Activated CD4-positive, alpha-beta T cell treated with anti-CD3 and anti-CD28 coated beads, Interleukin-2, amount 10 ng/mL, durations not matched to agents 24 days and 14 days (primary cell): ENCODE measurements at regions of chr19 and their contacts with region 1.

Region 1: GRCh38 chr19:54523403-54523802 is 20.8 kb downstream of the LAIR2 start:
- DNase-seq: peak; percentile 82
- H3K4me3 Mint-ChIP-seq: peak overlapping the region; percentile 79
- H3K27ac Mint-ChIP-seq: peak overlapping the region; percentile 81
- H3K4me1 Mint-ChIP-seq: peaks cover 52% of the 10 kb centered on the region
- H3K27me3 Mint-ChIP-seq: no peaks in the 10 kb centered on the region

Region 2: GRCh38 chr19:54481322-54481930 is 42.0 kb before region 1 on chr19:
- intact Hi-C with region 1: loop called (anchors 5 kb)
- DNase-seq: peak; percentile 84
- H3K4me3 Mint-ChIP-seq: no peak overlapping the region
- H3K27ac Mint-ChIP-seq: no peak overlapping the region
- H3K4me1 Mint-ChIP-seq: peaks cover 8% of the 10 kb centered on the region
- H3K27me3 Mint-ChIP-seq: peaks cover 24% of the 10 kb centered on the region

Region 3: GRCh38 chr19:54492568-54492967 is 30.8 kb before region 1 on chr19:
- intact Hi-C with region 1: no loop called
- DNase-seq: no peak
- H3K4me3 Mint-ChIP-seq: no peak overlapping the region
- H3K27ac Mint-ChIP-seq: no peak overlapping the region
- H3K4me1 Mint-ChIP-seq: peaks cover 1% of the 10 kb centered on the region
- H3K27me3 Mint-ChIP-seq: peaks cover 35% of the 10 kb centered on the region

Region 4: GRCh38 chr19:54558339-54558738 is 34.9 kb after region 1 on chr19:
- intact Hi-C with region 1: loop called (anchors 5 kb)
- DNase-seq: no peak
- H3K4me3 Mint-ChIP-seq: no peak overlapping the region
- H3K27ac Mint-ChIP-seq: no peak overlapping the region
- H3K4me1 Mint-ChIP-seq: no peaks in the 10 kb centered on the region
- H3K27me3 Mint-ChIP-seq: peaks cover 5% of the 10 kb centered on the region